ENCODE measurements at regions of chr4 and their contacts with region 1.

Region 1: GRCh38 chr4:110005461-110006056 is 92.9 kb downstream of the EGF start:
- DNase-seq: no peak
- H3K4me3 ChIP-seq: no peak overlapping the region
- H3K27ac ChIP-seq: no peak overlapping the region
- H3K4me1 ChIP-seq: peaks cover 0 to 18% (median 3%) of the 10 kb centered on the region in 3 donors
- H3K27me3 ChIP-seq: no peaks in the 10 kb centered on the region
- CTCF ChIP-seq: peak; percentile 41 to 83 (median 61)
- POLR2A ChIP-seq: no peak

Region 2: DNA sequence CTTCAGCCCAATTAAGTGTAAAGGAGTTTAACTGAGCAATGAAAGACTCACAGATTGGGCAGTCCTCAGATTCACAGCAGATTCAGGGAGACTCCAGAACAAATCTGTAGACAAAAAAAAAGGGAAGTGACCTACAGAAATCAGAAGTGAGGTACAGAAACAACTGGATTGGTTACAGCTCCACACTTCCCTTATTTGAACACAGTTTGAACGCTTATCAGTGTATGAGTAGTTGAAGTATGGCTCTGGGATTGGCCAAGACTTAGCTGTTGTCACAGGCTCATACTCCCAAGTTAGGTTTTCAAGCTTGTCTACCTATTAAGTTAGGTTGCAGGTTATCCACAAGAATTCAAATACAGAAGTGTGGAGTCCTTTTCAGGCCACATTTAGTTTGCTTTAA is 305.2 kb after region 1 on chr4:
- intact Hi-C with region 1: loop called (anchors 10 kb)
- DNase-seq: no peak
- H3K4me3 ChIP-seq: no peak overlapping the region
- H3K27ac ChIP-seq: no peak overlapping the region
- H3K4me1 ChIP-seq: no peaks in the 10 kb centered on the region
- H3K27me3 ChIP-seq: no peaks in the 10 kb centered on the region
- CTCF ChIP-seq: no peak
- POLR2A ChIP-seq: no peak

Measured in esophagus squamous epithelium (tissue), 5 donors.